T-cell (primary cell): ENCODE measurements at regions of chr13 and their contacts with region 1.

Region 1: GRCh38 chr13:72156760-72157159 is 289.8 kb upstream of the DACH1 start:
- DNase-seq: no peak
- ATAC-seq: no peak
- H3K4me3 ChIP-seq: no peak overlapping the region
- H3K4me3 Mint-ChIP-seq: no peak overlapping the region
- H3K27ac ChIP-seq: no peak overlapping the region
- H3K27ac Mint-ChIP-seq: no peak overlapping the region
- H3K4me1 ChIP-seq: no peaks in the 10 kb centered on the region
- H3K4me1 Mint-ChIP-seq: no peaks in the 10 kb centered on the region
- H3K27me3 ChIP-seq: no peaks in the 10 kb centered on the region
- H3K27me3 Mint-ChIP-seq: no peaks in the 10 kb centered on the region

Region 2: DNA sequence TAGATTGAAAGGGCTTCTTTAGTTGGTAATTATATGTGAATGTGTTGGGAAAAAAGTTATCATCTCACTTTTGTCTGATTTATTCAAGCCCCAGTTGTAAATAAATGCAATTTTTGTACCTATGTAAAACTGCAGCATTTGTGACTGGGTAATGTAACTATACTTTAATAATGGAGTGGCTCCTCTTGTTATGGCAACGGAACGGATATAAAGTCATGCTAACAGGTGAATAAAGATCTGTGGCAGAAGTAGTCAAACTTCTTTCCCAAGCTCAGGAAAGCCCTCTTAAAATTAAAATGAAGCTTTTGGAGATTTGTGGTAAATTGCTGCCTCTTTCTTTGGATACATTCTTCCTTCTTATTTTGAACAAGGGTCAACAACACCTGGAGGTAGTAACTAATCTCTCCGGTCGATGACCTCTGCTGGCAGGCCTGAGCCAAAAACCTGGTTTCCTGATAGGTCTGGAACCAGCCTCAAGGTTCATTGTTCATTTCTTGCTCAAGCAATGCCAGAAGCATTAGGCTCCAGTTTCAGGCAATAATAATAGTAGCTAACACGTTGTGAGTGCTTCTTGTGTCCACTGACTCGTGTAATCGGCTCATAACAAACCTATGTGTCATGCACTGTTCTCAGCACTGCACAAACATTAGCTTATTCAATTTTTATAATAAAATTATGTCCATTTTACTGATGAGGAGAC is 23.6 kb after region 1 on chr13:
- CTCF ChIA-PET with region 1: no interaction called
- POLR2A ChIA-PET with region 1: no interaction called
- DNase-seq: no peak
- ATAC-seq: no peak
- H3K4me3 ChIP-seq: no peak overlapping the region
- H3K4me3 Mint-ChIP-seq: no peak overlapping the region
- H3K27ac ChIP-seq: no peak overlapping the region
- H3K27ac Mint-ChIP-seq: no peak overlapping the region
- H3K4me1 ChIP-seq: no peaks in the 10 kb centered on the region
- H3K4me1 Mint-ChIP-seq: no peaks in the 10 kb centered on the region
- H3K27me3 ChIP-seq: no peaks in the 10 kb centered on the region
- H3K27me3 Mint-ChIP-seq: no peaks in the 10 kb centered on the region

Region 3: GRCh38 chr13:72204291-72204690 is 47.5 kb after region 1 on chr13:
- CTCF ChIA-PET with region 1: no interaction called
- POLR2A ChIA-PET with region 1: interaction called in 1 of 2 experiments, 10 read pairs
- DNase-seq: no peak
- ATAC-seq: no peak
- H3K4me3 ChIP-seq: no peak overlapping the region
- H3K4me3 Mint-ChIP-seq: no peak overlapping the region
- H3K27ac ChIP-seq: no peak overlapping the region
- H3K27ac Mint-ChIP-seq: no peak overlapping the region
- H3K4me1 ChIP-seq: no peaks in the 10 kb centered on the region
- H3K4me1 Mint-ChIP-seq: no peaks in the 10 kb centered on the region
- H3K27me3 ChIP-seq: no peaks in the 10 kb centered on the region
- H3K27me3 Mint-ChIP-seq: no peaks in the 10 kb centered on the region